PC-9 (cell line): ENCODE measurements at regions of chr1 and their contacts with region 1.

Region 1: DNA sequence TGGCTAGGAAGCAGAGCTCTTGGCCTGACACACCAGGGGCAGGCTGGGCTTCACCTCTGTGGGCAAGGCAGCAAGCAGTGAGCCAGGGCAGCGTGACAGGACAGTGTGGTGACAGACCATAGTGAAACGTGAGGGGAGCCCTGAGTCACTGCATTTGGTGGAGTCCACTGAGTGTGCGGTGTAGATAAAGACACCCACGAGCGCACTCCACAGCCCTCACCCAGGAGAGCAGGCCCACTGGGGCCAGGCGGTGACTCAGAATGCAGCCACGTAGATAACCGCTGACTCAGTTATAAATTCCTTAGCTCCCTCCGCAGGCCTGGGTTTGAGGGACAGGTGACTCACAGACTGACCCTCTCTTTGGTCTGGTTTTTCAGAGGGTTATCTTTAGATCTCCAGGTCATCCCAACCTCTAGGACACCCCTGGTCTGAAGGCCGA is 90.1 kb upstream of the TSPAN2 start:
- DNase-seq: peak; percentile 92 to 100
- H3K4me3 ChIP-seq: no peak overlapping the region
- H3K27ac ChIP-seq: peak overlapping the region; percentile 89
- H3K4me1 ChIP-seq: peaks cover 57% of the 10 kb centered on the region
- H3K27me3 ChIP-seq: no peaks in the 10 kb centered on the region
- CTCF ChIP-seq: no peak

Region 2: GRCh38 chr1:114803001-114803400 is 376.4 kb before region 1 on chr1:
- CTCF ChIA-PET with region 1: no interaction called
- POLR2A ChIA-PET with region 1: no interaction called
- intact Hi-C with region 1: no loop called
- DNase-seq: peak in 1 of 2 experiments; percentile 31
- H3K4me3 ChIP-seq: no peak overlapping the region
- H3K27ac ChIP-seq: no peak overlapping the region
- H3K4me1 ChIP-seq: no peaks in the 10 kb centered on the region
- H3K27me3 ChIP-seq: peaks cover 5% of the 10 kb centered on the region; the same call in 1 of the 2 replicates
- CTCF ChIP-seq: no peak

Region 3: GRCh38 chr1:115166531-115167091 is 12.8 kb before region 1 on chr1:
- CTCF ChIA-PET with region 1: interaction called, 5 read pairs
- POLR2A ChIA-PET with region 1: no interaction called
- intact Hi-C with region 1: loop called (anchors 1 kb)
- DNase-seq: peak in 1 of 2 experiments; percentile 60
- H3K4me3 ChIP-seq: no peak overlapping the region
- H3K27ac ChIP-seq: no peak overlapping the region
- H3K4me1 ChIP-seq: peaks cover 40% of the 10 kb centered on the region
- H3K27me3 ChIP-seq: no peaks in the 10 kb centered on the region
- CTCF ChIP-seq: no peak